ENCODE measurements at regions of chr3 and their contacts with region 1.

Region 1: GRCh38 chr3:165185707-165186327 is 10.4 kb downstream of the SLITRK3 start:
- DNase-seq: peak; percentile 81
- H3K4me3 Mint-ChIP-seq: no peak overlapping the region
- H3K27ac Mint-ChIP-seq: no peak overlapping the region
- H3K4me1 Mint-ChIP-seq: peaks cover 8% of the 10 kb centered on the region
- H3K27me3 Mint-ChIP-seq: no peaks in the 10 kb centered on the region
- CTCF ChIP-seq: peak; percentile 91

Region 2: DNA sequence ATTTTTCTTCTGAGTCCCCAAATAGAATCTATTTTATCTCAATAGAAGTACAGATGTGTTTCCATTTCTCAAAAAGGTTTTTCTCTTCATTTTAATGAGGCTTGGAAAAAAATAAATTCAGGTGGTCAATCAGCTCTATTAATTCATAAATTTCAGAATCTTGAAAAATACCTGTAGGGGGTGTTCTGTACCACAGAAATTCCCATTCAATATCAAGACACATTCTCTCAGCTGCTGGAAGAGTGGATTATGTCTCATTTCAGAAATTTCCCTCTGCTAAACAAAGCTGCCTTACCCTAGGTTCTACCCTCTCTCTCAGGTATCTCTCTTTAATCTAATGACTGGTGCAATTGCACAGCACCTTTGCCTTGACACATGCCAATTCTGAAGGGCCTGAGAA is 1228.7 kb before region 1 on chr3:
- CTCF ChIA-PET with region 1: no interaction called
- intact Hi-C with region 1: loop called (anchors 5 kb)
- DNase-seq: no peak
- H3K4me3 Mint-ChIP-seq: no peak overlapping the region
- H3K27ac Mint-ChIP-seq: no peak overlapping the region
- H3K4me1 Mint-ChIP-seq: no peaks in the 10 kb centered on the region
- H3K27me3 Mint-ChIP-seq: no peaks in the 10 kb centered on the region
- CTCF ChIP-seq: no peak

Region 3: GRCh38 chr3:164451072-164451910 is 734.5 kb before region 1 on chr3:
- CTCF ChIA-PET with region 1: no interaction called
- intact Hi-C with region 1: loop called (anchors 5 kb)
- DNase-seq: no peak
- H3K4me3 Mint-ChIP-seq: no peak overlapping the region
- H3K27ac Mint-ChIP-seq: no peak overlapping the region
- H3K4me1 Mint-ChIP-seq: peaks cover 25% of the 10 kb centered on the region
- H3K27me3 Mint-ChIP-seq: no peaks in the 10 kb centered on the region
- CTCF ChIP-seq: no peak

Region 4: GRCh38 chr3:164864454-164864853 is 321.4 kb before region 1 on chr3:
- CTCF ChIA-PET with region 1: no interaction called
- intact Hi-C with region 1: loop called (anchors 2 kb)
- DNase-seq: no peak
- H3K4me3 Mint-ChIP-seq: no peak overlapping the region
- H3K27ac Mint-ChIP-seq: no peak overlapping the region
- H3K4me1 Mint-ChIP-seq: no peaks in the 10 kb centered on the region
- H3K27me3 Mint-ChIP-seq: no peaks in the 10 kb centered on the region
- CTCF ChIP-seq: no peak

Region 5: GRCh38 chr3:165279471-165279870 is 93.7 kb after region 1 on chr3:
- CTCF ChIA-PET with region 1: no interaction called
- intact Hi-C with region 1: no loop called
- DNase-seq: no peak
- H3K4me3 Mint-ChIP-seq: no peak overlapping the region
- H3K27ac Mint-ChIP-seq: no peak overlapping the region
- H3K4me1 Mint-ChIP-seq: no peaks in the 10 kb centered on the region
- H3K27me3 Mint-ChIP-seq: no peaks in the 10 kb centered on the region
- CTCF ChIP-seq: no peak